HAP-1 (cell line): ENCODE measurements at regions of chr21 and their contacts with region 1.

Region 1: GRCh38 chr21:17679002-17679600 is 66.4 kb upstream of the BTG3 start:
- DNase-seq: peak in 1 of 2 experiments; percentile 79
- H3K4me3 ChIP-seq: no peak overlapping the region
- H3K4me1 ChIP-seq: no peaks in the 10 kb centered on the region
- H3K27me3 ChIP-seq: no peaks in the 10 kb centered on the region

Region 2: GRCh38 chr21:17793246-17794123 is 114.4 kb after region 1 on chr21:
- in situ Hi-C with region 1: no loop called
- DNase-seq: no peak
- H3K4me3 ChIP-seq: no peak overlapping the region
- H3K4me1 ChIP-seq: no peaks in the 10 kb centered on the region
- H3K27me3 ChIP-seq: no peaks in the 10 kb centered on the region

Region 3: GRCh38 chr21:17925000-17925610 is 246.0 kb after region 1 on chr21:
- in situ Hi-C with region 1: loop called (anchors 25 kb)
- DNase-seq: peak; percentile 71 to 76
- H3K4me3 ChIP-seq: no peak overlapping the region
- H3K4me1 ChIP-seq: no peaks in the 10 kb centered on the region
- H3K27me3 ChIP-seq: no peaks in the 10 kb centered on the region

Region 4: GRCh38 chr21:18265944-18266343 is 586.8 kb after region 1 on chr21:
- in situ Hi-C with region 1: no loop called
- DNase-seq: no peak
- H3K4me3 ChIP-seq: no peak overlapping the region
- H3K4me1 ChIP-seq: no peaks in the 10 kb centered on the region
- H3K27me3 ChIP-seq: no peaks in the 10 kb centered on the region